ENCODE measurements at regions of chr10 and their contacts with region 1.

Region 1: GRCh38 chr10:70404036-70404786 is at the start of gene EIF4EBP2:
- DNase-seq: peak; percentile 94 to 100 (median 98)
- ATAC-seq: peak; percentile 93
- H3K4me3 ChIP-seq: peak within 1 kb of the TSS; percentile 87
- H3K4me3 Mint-ChIP-seq: peak within 1 kb of the TSS; percentile 96
- H3K27ac ChIP-seq: peak within 1 kb of the TSS; percentile 60 to 74
- H3K27ac Mint-ChIP-seq: peak within 1 kb of the TSS; percentile 86
- H3K4me1 ChIP-seq: peaks cover 35% of the 10 kb centered on the region
- H3K4me1 Mint-ChIP-seq: peaks cover 50% of the 10 kb centered on the region
- H3K27me3 ChIP-seq: no peaks in the 10 kb centered on the region
- H3K27me3 Mint-ChIP-seq: no peaks in the 10 kb centered on the region
- CTCF ChIP-seq: no peak
- total RNA-seq, gene EIF4EBP2: 21.4 to 22.6 TPM

Region 2: GRCh38 chr10:70093335-70093944 is 310.8 kb before region 1 on chr10:
- CTCF ChIA-PET with region 1: no interaction called
- POLR2A ChIA-PET with region 1: interaction called, 10 read pairs
- intact Hi-C with region 1: no loop called
- DNase-seq: peak in 6 of 14 experiments; percentile 2 to 79 (median 42)
- ATAC-seq: peak; percentile 63
- H3K4me3 ChIP-seq: peak overlapping the region; percentile 49
- H3K4me3 Mint-ChIP-seq: peak overlapping the region; percentile 75
- H3K27ac ChIP-seq: peak overlapping the region; percentile 47 to 52
- H3K27ac Mint-ChIP-seq: peak overlapping the region; percentile 99
- H3K4me1 ChIP-seq: peaks cover 34% of the 10 kb centered on the region
- H3K4me1 Mint-ChIP-seq: peaks cover 64% of the 10 kb centered on the region
- H3K27me3 ChIP-seq: no peaks in the 10 kb centered on the region
- H3K27me3 Mint-ChIP-seq: no peaks in the 10 kb centered on the region
- CTCF ChIP-seq: no peak

Region 3: GRCh38 chr10:70363971-70364771 is 40.0 kb before region 1 on chr10:
- CTCF ChIA-PET with region 1: interaction called, 10 read pairs
- POLR2A ChIA-PET with region 1: interaction called, 11 read pairs
- intact Hi-C with region 1: no loop called
- DNase-seq: peak; percentile 72 to 91 (median 78)
- ATAC-seq: peak; percentile 98
- H3K4me3 ChIP-seq: no peak overlapping the region
- H3K4me3 Mint-ChIP-seq: no peak overlapping the region
- H3K27ac ChIP-seq: no peak overlapping the region
- H3K27ac Mint-ChIP-seq: no peak overlapping the region
- H3K4me1 ChIP-seq: peaks cover 13% of the 10 kb centered on the region
- H3K4me1 Mint-ChIP-seq: peaks cover 9% of the 10 kb centered on the region
- H3K27me3 ChIP-seq: no peaks in the 10 kb centered on the region
- H3K27me3 Mint-ChIP-seq: no peaks in the 10 kb centered on the region
- CTCF ChIP-seq: peak; percentile 89

Region 4: DNA sequence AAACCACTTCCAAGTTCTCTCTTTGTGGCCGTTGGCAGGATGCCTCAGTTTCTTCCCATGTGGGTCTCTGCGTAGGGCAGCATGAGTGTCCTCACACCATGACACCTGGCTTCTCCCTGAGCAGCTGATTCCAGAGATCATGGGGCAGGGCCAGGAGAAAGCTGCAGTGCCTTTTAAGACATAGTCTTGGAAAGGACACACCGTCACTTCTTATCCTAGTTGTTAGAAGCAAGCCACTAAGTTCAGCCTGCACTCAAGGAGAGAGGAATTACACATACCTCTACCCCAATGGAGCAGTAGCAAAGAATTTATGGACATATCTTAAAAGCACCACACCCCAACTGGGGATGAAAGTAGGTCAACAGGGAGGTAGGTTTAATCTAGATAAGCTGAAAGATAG is 20.9 kb after region 1 on chr10:
- CTCF ChIA-PET with region 1: no interaction called
- POLR2A ChIA-PET with region 1: interaction called, 14 read pairs
- intact Hi-C with region 1: no loop called
- DNase-seq: no peak
- ATAC-seq: no peak
- H3K4me3 ChIP-seq: no peak overlapping the region
- H3K4me3 Mint-ChIP-seq: no peak overlapping the region
- H3K27ac ChIP-seq: no peak overlapping the region
- H3K27ac Mint-ChIP-seq: no peak overlapping the region
- H3K4me1 ChIP-seq: no peaks in the 10 kb centered on the region
- H3K4me1 Mint-ChIP-seq: no peaks in the 10 kb centered on the region
- H3K27me3 ChIP-seq: no peaks in the 10 kb centered on the region
- H3K27me3 Mint-ChIP-seq: no peaks in the 10 kb centered on the region
- CTCF ChIP-seq: no peak

Region 5: DNA sequence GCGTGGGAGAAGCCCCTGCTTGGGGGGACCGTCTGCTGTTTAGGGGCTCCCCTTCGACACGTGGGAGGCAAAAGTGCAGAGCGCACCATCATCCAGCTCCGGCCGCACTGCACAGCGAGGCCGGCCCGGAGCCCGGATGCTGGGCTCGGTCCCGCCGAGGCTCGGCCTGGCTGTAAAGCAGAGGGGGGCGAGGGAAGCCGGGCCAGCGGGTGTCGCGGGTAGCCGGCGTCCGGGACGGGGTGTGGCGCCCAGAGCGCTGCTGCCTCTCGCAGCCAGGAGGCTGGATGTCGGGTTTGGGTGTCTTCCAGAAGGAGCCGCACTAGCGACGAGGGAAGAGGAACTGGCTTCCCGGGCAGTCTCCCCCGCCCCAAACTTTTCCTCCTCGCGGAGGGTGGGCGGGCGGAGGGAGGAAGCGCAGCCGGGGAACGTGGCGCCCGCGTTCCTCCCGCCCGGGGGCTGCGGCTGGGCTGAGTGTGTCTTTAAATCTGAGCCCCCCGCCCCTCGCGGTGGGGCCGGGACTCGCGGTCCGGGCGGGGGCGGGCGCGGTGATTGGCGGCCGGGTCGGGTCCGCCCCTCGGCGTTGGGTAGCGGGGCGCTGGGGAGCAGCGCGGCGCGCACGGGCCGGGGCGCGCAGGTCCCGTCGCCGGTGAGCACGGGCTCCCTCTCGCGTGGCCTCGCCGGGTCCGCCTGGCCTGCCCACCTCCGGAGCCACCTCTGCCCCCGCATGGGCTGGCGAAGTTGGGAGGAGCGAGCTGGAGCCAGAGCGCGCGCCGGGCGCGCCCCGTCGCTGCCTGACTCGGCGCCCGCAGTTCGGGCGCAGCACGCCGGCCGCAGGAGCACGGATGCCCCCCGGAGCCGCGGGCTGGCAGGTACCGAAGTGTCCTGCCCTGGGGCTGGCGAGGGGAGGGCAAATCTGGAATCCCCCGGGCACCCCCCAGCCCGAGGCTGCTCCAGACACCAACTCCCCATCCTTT is 74.3 kb after region 1 on chr10 and contains the start of gene PALD1:
- CTCF ChIA-PET with region 1: no interaction called
- POLR2A ChIA-PET with region 1: interaction called, 4 read pairs
- intact Hi-C with region 1: loop called in 1 of 2 experiments (anchors 2 kb)
- DNase-seq: peak in 6 of 14 experiments; percentile 3 to 62 (median 36)
- ATAC-seq: peak; percentile 8
- H3K4me3 ChIP-seq: peak within 1 kb of the TSS; percentile 49
- H3K4me3 Mint-ChIP-seq: peak within 1 kb of the TSS; percentile 84
- H3K27ac ChIP-seq: no peak within 1 kb of the TSS
- H3K27ac Mint-ChIP-seq: peak within 1 kb of the TSS; percentile 58
- H3K4me1 ChIP-seq: peaks cover 50% of the 10 kb centered on the region
- H3K4me1 Mint-ChIP-seq: peaks cover 64% of the 10 kb centered on the region
- H3K27me3 ChIP-seq: no peaks in the 10 kb centered on the region
- H3K27me3 Mint-ChIP-seq: no peaks in the 10 kb centered on the region
- CTCF ChIP-seq: no peak
- total RNA-seq, gene PALD1: 0.36 to 0.44 TPM

Region 6: GRCh38 chr10:71234970-71235685 is 830.9 kb after region 1 on chr10:
- CTCF ChIA-PET with region 1: no interaction called
- POLR2A ChIA-PET with region 1: no interaction called
- intact Hi-C with region 1: no loop called
- DNase-seq: no peak
- ATAC-seq: no peak
- H3K4me3 ChIP-seq: no peak overlapping the region
- H3K4me3 Mint-ChIP-seq: no peak overlapping the region
- H3K27ac ChIP-seq: no peak overlapping the region
- H3K27ac Mint-ChIP-seq: no peak overlapping the region
- H3K4me1 ChIP-seq: peaks cover 3% of the 10 kb centered on the region
- H3K4me1 Mint-ChIP-seq: no peaks in the 10 kb centered on the region
- H3K27me3 ChIP-seq: no peaks in the 10 kb centered on the region
- H3K27me3 Mint-ChIP-seq: peaks cover 5% of the 10 kb centered on the region
- CTCF ChIP-seq: no peak